ENCODE measurements at regions of chr6 and their contacts with region 1.

Region 1: DNA sequence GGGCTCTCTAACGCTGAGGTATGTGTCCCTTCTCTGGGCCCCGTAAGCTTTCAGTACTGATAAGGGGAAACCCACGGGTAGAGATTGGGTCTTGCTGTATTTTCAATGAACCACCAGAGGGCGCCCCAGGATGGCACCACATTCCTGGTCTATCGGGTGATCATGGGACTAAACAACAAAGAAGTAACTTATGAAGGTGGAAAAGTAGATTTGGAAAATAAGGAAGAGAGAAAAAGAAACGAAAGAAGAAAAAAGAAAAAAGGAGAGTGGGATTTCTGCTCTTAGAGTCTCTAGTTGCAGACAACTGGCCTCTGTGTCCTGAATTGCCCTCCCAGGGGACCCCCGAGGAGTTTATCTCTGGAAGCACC is 93.8 kb downstream of the GMPR start:
- DNase-seq: peak; percentile 91
- H3K4me3 Mint-ChIP-seq: no peak overlapping the region
- H3K27ac Mint-ChIP-seq: no peak overlapping the region
- H3K4me1 Mint-ChIP-seq: peaks cover 9% of the 10 kb centered on the region
- H3K27me3 Mint-ChIP-seq: no peaks in the 10 kb centered on the region

Region 2: GRCh38 chr6:16292942-16293341 is 39.2 kb before region 1 on chr6:
- CTCF ChIA-PET with region 1: interaction called, 10 read pairs
- POLR2A ChIA-PET with region 1: no interaction called
- intact Hi-C with region 1: loop called (anchors 5 kb)
- DNase-seq: no peak
- H3K4me3 Mint-ChIP-seq: no peak overlapping the region
- H3K27ac Mint-ChIP-seq: no peak overlapping the region
- H3K4me1 Mint-ChIP-seq: no peaks in the 10 kb centered on the region
- H3K27me3 Mint-ChIP-seq: no peaks in the 10 kb centered on the region

Region 3: DNA sequence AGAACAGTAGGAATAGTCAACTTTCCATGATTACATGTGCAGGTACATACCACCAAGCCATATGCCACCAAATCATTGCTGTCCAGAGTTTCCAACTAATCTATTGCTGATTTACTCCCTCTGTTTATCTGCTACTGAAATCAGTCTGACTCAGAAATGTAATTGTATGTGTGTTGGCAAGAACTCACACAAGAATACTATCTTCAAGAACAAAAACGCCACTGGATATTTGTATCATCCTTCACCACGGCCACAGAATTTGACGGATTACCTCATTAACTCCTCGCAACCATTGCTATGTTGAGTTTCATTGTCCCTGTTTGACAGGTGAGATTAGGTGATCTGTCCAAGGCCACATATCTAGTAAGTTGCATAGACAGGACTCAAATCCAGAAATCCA is 65.5 kb after region 1 on chr6:
- CTCF ChIA-PET with region 1: interaction called, 3 read pairs
- POLR2A ChIA-PET with region 1: no interaction called
- intact Hi-C with region 1: loop called (anchors 1 kb)
- DNase-seq: peak; percentile 27
- H3K4me3 Mint-ChIP-seq: no peak overlapping the region
- H3K27ac Mint-ChIP-seq: no peak overlapping the region
- H3K4me1 Mint-ChIP-seq: peaks cover 30% of the 10 kb centered on the region
- H3K27me3 Mint-ChIP-seq: no peaks in the 10 kb centered on the region

Region 4: DNA sequence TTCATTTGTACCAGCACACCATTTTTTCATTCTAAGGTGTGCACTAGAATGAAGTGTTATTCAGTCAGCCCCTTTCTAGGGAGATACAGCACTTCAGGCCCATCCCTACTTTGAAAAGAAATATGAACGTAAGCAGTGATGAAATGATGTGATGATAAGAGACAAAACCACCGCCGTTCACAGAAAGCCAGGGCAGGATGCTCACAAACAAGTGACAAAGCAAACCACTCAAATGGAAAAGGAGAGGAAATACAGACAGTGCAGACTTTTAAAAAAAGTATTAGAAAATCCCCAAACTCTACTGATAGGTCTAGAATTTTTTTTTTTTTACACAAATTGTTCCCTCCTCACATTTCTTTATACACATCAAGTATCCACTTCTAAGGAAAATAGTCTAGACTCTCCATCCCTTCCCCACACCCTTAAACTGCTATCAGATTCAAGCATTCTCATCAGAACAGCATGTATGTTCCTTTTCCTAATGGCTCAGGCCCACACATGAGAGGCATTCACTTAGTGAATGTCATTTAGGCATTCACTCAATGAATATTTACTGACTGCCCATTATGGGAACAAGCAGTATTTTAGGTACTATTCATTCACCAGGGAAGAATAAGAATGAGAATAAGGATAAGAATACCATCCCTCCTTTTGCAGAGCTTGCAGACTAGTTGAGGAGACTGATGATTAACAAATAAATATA is 149.7 kb after region 1 on chr6:
- CTCF ChIA-PET with region 1: interaction called, 4 read pairs
- POLR2A ChIA-PET with region 1: no interaction called
- intact Hi-C with region 1: loop called (anchors 1 kb)
- DNase-seq: peak; percentile 76
- H3K4me3 Mint-ChIP-seq: peak overlapping the region; percentile 47
- H3K27ac Mint-ChIP-seq: peak overlapping the region; percentile 87
- H3K4me1 Mint-ChIP-seq: peaks cover 93% of the 10 kb centered on the region
- H3K27me3 Mint-ChIP-seq: no peaks in the 10 kb centered on the region

Region 5: GRCh38 chr6:16770701-16771569 is 438.8 kb after region 1 on chr6:
- CTCF ChIA-PET with region 1: interaction called, 7 read pairs
- POLR2A ChIA-PET with region 1: no interaction called
- intact Hi-C with region 1: loop called (anchors 1 kb)
- DNase-seq: peak; percentile 86
- H3K4me3 Mint-ChIP-seq: peak overlapping the region; percentile 42
- H3K27ac Mint-ChIP-seq: no peak overlapping the region
- H3K4me1 Mint-ChIP-seq: peaks cover 50% of the 10 kb centered on the region
- H3K27me3 Mint-ChIP-seq: no peaks in the 10 kb centered on the region